AG04450 (cell line): ENCODE measurements at regions of chr15 and their contacts with region 1.

Region 1: DNA sequence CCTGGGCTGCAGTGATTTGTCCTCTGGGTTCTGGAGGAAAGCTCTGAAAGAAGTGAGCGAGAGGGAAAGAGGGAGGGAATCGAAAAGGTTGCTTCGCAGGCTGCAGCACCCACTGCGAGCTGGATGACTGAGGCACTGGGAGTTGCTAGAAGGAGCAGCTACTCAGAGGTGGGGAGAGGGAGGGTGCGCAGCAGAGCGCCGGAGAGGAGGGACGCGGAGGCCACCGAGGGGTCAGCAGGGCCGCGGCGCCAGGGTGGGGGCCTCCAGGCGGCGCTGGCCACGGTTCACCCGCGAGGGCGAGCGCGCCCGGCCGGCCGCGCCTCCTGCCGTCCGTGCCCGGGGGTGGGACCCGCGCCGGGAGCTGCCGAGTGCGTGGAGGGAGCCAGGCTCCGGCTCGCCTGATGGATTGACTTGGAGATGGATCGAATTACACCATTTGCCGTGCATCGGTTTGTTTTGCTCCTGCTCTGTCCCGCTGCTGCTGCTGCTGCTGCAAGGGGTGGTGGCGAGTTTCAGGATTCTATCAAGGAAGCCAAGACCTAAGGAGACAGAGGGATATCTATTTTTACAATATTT is at the start of gene SEMA6D:
- DNase-seq: peak; percentile 54
- H3K4me3 ChIP-seq: peak within 1 kb of the TSS; percentile 74
- H3K27ac ChIP-seq: peak within 1 kb of the TSS; percentile 59
- H3K27me3 ChIP-seq: no peaks in the 10 kb centered on the region
- CTCF ChIP-seq: peak; percentile 28; the same call in 1 of the 2 replicates
- polyA plus RNA-seq, gene SEMA6D: 7.9 and 10.7 TPM in 2 replicates

Region 2: DNA sequence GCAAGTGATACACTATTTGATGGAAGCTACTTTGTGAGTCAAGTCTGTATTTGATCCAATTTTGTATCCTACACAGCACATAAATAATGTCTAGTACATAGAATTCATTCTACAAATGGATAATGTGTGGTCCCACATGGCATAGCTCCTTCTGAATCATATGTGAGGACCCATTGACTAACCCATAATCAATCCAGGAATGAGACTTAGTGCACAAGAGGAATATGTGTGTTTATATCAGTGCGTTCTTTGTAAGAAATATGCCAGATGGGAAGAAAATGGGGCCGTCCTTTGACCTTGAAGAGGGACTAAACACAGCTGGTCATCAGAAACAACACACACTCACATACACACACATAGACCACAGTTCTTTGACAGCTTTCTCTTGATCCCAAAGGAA is 282.5 kb before region 1 on chr15:
- CTCF ChIA-PET with region 1: interaction called, 3 read pairs
- POLR2A ChIA-PET with region 1: interaction called, 16 read pairs
- DNase-seq: no peak
- H3K4me3 ChIP-seq: no peak overlapping the region
- H3K27ac ChIP-seq: peak overlapping the region; percentile 47
- H3K27me3 ChIP-seq: no peaks in the 10 kb centered on the region
- CTCF ChIP-seq: no peak

Region 3: GRCh38 chr15:47620965-47621685 is 96.0 kb before region 1 on chr15:
- CTCF ChIA-PET with region 1: no interaction called
- POLR2A ChIA-PET with region 1: no interaction called
- DNase-seq: no peak
- H3K4me3 ChIP-seq: no peak overlapping the region
- H3K27ac ChIP-seq: no peak overlapping the region
- H3K27me3 ChIP-seq: no peaks in the 10 kb centered on the region
- CTCF ChIP-seq: no peak

Region 4: GRCh38 chr15:47768735-47769134 is 51.6 kb after region 1 on chr15:
- CTCF ChIA-PET with region 1: no interaction called
- POLR2A ChIA-PET with region 1: no interaction called
- DNase-seq: no peak
- H3K4me3 ChIP-seq: no peak overlapping the region
- H3K27ac ChIP-seq: no peak overlapping the region
- H3K27me3 ChIP-seq: no peaks in the 10 kb centered on the region
- CTCF ChIP-seq: no peak

Region 5: GRCh38 chr15:48084759-48085590 is 367.9 kb after region 1 on chr15:
- CTCF ChIA-PET with region 1: interaction called, 14 read pairs
- POLR2A ChIA-PET with region 1: no interaction called
- DNase-seq: no peak
- H3K4me3 ChIP-seq: no peak overlapping the region
- H3K27ac ChIP-seq: no peak overlapping the region
- H3K27me3 ChIP-seq: peaks cover 5% of the 10 kb centered on the region
- CTCF ChIP-seq: peak; percentile 67